Activated CD4-positive, alpha-beta memory T cell treated with anti-CD3 and anti-CD28 coated beads, Interleukin-2, amount 10 ng/mL, durations not matched to agents 7 days and 5 days (primary cell): ENCODE measurements at regions of chr2 and their contacts with region 1.

Region 1: GRCh38 chr2:96913398-96914202 is 43.7 kb upstream of the SEMA4C start:
- DNase-seq: peak; percentile 83
- H3K4me3 Mint-ChIP-seq: peak overlapping the region; percentile 62
- H3K27ac Mint-ChIP-seq: peak overlapping the region; percentile 91
- H3K4me1 Mint-ChIP-seq: peaks cover 47% of the 10 kb centered on the region
- H3K27me3 Mint-ChIP-seq: peaks cover 6% of the 10 kb centered on the region

Region 2: GRCh38 chr2:96868555-96869280 is 44.9 kb before region 1 on chr2:
- CTCF ChIA-PET with region 1: interaction called, 14 read pairs
- POLR2A ChIA-PET with region 1: interaction called, 8 read pairs
- DNase-seq: peak; percentile 75
- H3K4me3 Mint-ChIP-seq: peak overlapping the region; percentile 82
- H3K27ac Mint-ChIP-seq: peak overlapping the region; percentile 71
- H3K4me1 Mint-ChIP-seq: peaks cover 35% of the 10 kb centered on the region
- H3K27me3 Mint-ChIP-seq: peaks cover 10% of the 10 kb centered on the region

Region 3: GRCh38 chr2:96923810-96924774 is 10.5 kb after region 1 on chr2:
- CTCF ChIA-PET with region 1: interaction called, 4 read pairs
- POLR2A ChIA-PET with region 1: interaction called, 18 read pairs
- DNase-seq: no peak
- H3K4me3 Mint-ChIP-seq: peak overlapping the region; percentile 12
- H3K27ac Mint-ChIP-seq: peak overlapping the region; percentile 2
- H3K4me1 Mint-ChIP-seq: peaks cover 29% of the 10 kb centered on the region
- H3K27me3 Mint-ChIP-seq: peaks cover 6% of the 10 kb centered on the region

Region 4: GRCh38 chr2:96960153-96960961 is 46.8 kb after region 1 on chr2:
- CTCF ChIA-PET with region 1: interaction called, 14 read pairs
- POLR2A ChIA-PET with region 1: interaction called, 11 read pairs
- DNase-seq: peak; percentile 87
- H3K4me3 Mint-ChIP-seq: peak overlapping the region; percentile 14
- H3K27ac Mint-ChIP-seq: peak overlapping the region; percentile 92
- H3K4me1 Mint-ChIP-seq: peaks cover 54% of the 10 kb centered on the region
- H3K27me3 Mint-ChIP-seq: no peaks in the 10 kb centered on the region

Region 5: DNA sequence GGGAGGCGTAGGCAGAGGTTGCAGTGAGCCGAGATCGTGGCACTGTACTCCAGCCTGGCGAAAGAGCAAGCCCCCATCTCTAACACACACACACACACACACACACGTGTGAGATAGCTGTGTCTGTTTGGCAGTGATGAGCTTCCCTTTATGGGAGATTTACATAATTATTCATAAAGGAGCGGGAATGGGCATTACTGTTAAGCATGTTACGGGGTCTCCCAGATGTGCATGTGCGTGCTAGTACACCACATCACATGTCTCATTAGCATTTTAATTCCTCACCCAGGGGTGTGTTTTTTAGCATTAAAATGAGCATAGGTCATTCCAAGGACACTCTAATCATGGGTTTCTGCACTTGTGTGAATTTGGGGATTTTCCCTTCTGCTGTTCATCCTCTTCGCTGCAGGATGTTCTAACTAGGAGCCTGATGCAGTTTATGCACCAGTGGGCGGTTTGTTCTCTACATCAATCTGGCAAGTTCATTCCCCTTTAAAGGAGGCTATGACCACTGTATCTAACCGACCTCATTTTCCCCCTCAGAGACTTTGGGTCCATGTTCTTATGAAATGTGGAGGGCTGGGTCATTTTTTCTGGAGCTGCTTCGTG is 73.8 kb after region 1 on chr2:
- CTCF ChIA-PET with region 1: no interaction called
- POLR2A ChIA-PET with region 1: no interaction called
- DNase-seq: no peak
- H3K4me3 Mint-ChIP-seq: no peak overlapping the region
- H3K27ac Mint-ChIP-seq: no peak overlapping the region
- H3K4me1 Mint-ChIP-seq: no peaks in the 10 kb centered on the region
- H3K27me3 Mint-ChIP-seq: peaks cover 3% of the 10 kb centered on the region